AG04449 (cell line): ENCODE measurements at regions of chr2 and their contacts with region 1.

Region 1: GRCh38 chr2:20446917-20447436 is at the start of gene RHOB:
- DNase-seq: peak; percentile 90
- H3K4me3 ChIP-seq: peak within 1 kb of the TSS; percentile 89
- CTCF ChIP-seq: no peak

Region 2: GRCh38 chr2:20496081-20496876 is 49.3 kb after region 1 on chr2:
- CTCF ChIA-PET with region 1: no interaction called
- POLR2A ChIA-PET with region 1: interaction called, 23 read pairs
- DNase-seq: peak; percentile 37
- H3K4me3 ChIP-seq: no peak overlapping the region
- CTCF ChIP-seq: no peak

Region 3: GRCh38 chr2:20573620-20574422 is 126.8 kb after region 1 on chr2:
- CTCF ChIA-PET with region 1: no interaction called
- POLR2A ChIA-PET with region 1: interaction called, 39 read pairs
- DNase-seq: no peak
- H3K4me3 ChIP-seq: no peak overlapping the region
- CTCF ChIP-seq: no peak

Region 4: DNA sequence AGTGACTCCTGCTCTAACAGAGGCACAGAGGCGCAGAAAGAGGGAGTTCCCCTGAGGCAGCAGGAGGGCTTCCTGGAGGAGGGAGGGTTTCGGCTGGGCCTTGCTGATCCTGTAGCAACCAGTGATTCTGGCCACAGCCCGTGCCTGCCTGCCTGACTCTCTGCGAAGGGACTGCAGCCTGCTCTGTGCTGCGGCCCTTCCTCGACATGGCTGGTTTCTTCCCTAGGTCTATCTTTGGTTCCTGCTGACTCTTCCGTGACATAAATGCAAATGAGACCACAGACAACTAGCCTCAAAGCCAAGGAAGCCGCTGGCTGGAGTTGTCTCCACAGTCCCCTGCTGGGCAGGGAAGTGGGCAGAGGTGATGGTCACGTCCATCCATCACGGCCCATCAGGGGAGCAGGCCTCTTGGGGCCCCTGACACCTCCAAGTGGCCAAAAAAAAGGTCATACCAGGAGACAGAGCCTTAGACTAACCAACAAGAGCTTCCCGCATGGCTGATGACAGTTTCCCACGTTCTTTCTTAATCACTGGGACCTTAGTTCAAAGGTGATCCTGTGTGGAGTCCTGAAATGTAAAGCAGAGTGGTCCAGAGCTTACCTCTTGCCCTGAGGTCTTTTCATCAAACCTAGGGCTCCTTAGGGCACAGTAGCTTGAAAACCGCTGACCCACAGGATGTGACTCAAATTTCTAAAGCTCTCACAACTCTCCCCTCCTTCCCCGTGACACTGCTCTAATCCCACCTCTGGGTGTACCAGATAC is 148.6 kb after region 1 on chr2:
- CTCF ChIA-PET with region 1: interaction called, 21 read pairs
- POLR2A ChIA-PET with region 1: interaction called, 33 read pairs
- DNase-seq: no peak
- H3K4me3 ChIP-seq: no peak overlapping the region
- CTCF ChIP-seq: no peak

Region 5: DNA sequence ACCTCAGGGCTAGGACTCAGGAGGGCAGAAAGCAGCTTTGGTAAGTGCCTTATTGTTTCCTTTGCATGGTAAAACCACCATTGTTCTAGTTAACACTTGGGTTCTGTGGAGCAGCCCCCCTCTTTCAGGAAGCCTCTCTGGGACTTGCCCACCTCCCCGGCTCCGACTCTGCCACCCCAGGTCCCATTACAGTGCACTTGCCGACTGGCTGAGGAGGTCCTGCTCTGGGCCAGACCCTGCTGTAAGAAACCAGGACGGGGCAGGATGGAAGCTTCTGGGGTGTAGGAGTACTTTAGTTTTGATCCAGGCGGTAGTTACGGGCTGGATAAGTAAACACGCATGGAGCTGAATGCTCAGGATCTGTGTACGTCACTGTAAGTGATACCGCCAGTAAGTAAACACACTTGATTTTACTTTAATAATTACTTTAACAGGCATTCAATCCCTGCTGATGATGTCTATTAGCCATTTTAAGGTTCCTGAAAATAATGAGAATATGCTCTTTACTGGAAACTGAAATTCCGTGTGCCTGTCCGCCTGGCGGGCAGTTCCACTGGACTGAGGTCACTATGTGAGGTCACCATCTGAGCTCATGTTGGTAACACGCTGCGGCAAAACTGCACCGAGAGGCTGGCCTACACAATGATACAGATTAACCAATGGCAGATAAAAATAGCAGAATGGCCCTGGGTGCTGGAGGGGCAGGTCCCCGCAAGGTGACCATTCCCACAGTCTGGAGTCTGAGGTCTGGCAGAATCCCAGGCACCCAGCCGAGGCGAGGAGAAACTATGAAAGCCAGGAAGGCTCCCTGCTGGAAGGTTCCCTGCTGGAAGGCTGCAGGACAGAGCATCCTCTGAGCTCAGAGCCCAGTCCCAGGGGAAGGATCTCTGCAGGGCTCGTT is 178.8 kb after region 1 on chr2:
- CTCF ChIA-PET with region 1: interaction called, 394 read pairs
- POLR2A ChIA-PET with region 1: interaction called, 107 read pairs
- DNase-seq: no peak
- H3K4me3 ChIP-seq: no peak overlapping the region
- CTCF ChIP-seq: no peak